ENCODE measurements at regions of chr1 and their contacts with region 1.

Region 1: GRCh38 chr1:155208541-155209311 is at the start of gene MTX1:
- DNase-seq: no peak
- H3K4me3 ChIP-seq: peak within 1 kb of the TSS; percentile 89
- CTCF ChIP-seq: no peak

Region 2: DNA sequence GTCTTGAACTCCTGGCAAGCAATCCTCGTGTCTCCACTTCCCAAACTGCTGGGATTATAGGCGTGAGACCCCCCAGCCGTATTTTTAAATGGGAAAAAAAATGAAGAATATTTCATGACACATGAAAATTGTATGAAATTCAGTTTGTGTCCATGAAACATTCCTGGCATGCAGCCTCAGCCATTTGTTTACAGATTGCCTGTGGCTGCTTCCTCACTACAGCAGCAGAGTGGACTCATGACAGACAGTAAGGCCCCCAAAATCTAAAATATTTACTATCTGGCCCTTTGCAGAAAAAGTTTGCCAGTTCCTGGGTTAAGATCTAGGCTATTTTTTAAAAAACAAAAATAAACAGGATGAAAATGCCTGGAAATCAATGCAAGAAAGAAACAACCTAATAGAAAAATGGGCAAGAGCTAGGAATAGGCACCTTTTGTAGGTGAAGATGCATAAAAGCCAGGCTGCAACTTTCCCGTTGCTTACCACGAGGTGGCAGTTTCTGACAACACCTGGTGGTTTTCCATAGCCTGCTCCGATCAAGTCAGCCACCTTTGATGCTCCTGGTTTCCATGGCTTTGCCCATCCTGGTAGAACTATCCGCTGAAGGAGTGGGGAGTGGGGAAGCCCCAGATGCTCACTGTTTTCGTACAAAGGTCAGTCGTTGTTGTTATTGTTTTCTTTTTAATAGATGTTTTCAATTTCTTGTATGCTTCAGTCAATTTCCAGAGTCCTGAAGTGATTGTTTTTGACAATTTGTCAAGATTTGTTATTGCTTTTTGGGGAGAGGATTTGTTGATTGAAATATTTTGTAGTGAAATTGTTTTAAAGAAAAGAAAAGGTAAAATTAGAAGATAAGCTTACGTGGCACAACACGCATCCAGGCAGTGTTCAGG is 674.5 kb before region 1 on chr1:
- CTCF ChIA-PET with region 1: no interaction called
- POLR2A ChIA-PET with region 1: no interaction called
- DNase-seq: no peak
- H3K4me3 ChIP-seq: no peak overlapping the region
- CTCF ChIP-seq: peak; percentile 35

Region 3: GRCh38 chr1:155193275-155193990 is 15.3 kb before region 1 on chr1:
- CTCF ChIA-PET with region 1: interaction called, 144 read pairs
- POLR2A ChIA-PET with region 1: interaction called, 45 read pairs
- DNase-seq: no peak
- H3K4me3 ChIP-seq: peak overlapping the region; percentile 66
- CTCF ChIP-seq: peak; percentile 99

Region 4: DNA sequence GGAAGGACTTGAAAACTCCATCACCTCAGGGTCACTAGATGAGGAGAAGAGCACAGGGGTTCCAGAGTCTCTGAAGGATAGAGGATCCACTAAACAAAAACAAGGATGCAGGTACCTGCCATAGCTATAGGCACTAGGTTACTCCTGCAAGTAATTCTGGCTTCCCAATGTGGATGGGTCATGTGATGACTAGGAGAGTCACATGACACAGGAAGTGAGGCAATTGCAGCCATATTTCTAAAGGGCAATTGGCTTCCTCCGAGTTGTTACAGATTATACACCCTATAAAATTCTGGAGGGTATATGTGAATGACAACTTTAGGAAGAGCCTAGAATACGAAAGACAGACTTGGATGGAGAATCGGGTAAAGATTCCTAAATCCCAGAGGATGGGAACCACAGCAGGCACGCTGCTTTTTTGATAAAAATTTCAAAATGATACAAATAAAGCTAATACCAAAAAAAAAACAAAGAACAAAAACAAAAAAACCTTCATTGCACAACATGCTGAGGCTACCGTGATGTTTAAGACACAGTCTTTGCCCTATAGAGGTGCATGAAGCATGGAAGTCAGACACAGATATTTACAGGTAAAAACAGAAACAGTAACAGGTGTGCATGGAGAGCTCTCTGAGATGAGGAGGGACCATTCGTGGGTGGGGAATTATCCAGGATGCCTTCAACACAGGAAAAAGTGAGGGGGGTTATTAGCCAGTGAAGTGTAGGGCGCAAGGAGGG is 10.3 kb after region 1 on chr1:
- CTCF ChIA-PET with region 1: interaction called, 139 read pairs
- POLR2A ChIA-PET with region 1: interaction called, 4 read pairs
- DNase-seq: no peak
- H3K4me3 ChIP-seq: no peak overlapping the region
- CTCF ChIP-seq: no peak

Region 5: GRCh38 chr1:155227261-155228095 is 18.8 kb after region 1 on chr1:
- CTCF ChIA-PET with region 1: interaction called, 139 read pairs
- POLR2A ChIA-PET with region 1: interaction called, 8 read pairs
- DNase-seq: peak; percentile 94
- H3K4me3 ChIP-seq: peak overlapping the region; percentile 77
- CTCF ChIP-seq: no peak

Region 6: DNA sequence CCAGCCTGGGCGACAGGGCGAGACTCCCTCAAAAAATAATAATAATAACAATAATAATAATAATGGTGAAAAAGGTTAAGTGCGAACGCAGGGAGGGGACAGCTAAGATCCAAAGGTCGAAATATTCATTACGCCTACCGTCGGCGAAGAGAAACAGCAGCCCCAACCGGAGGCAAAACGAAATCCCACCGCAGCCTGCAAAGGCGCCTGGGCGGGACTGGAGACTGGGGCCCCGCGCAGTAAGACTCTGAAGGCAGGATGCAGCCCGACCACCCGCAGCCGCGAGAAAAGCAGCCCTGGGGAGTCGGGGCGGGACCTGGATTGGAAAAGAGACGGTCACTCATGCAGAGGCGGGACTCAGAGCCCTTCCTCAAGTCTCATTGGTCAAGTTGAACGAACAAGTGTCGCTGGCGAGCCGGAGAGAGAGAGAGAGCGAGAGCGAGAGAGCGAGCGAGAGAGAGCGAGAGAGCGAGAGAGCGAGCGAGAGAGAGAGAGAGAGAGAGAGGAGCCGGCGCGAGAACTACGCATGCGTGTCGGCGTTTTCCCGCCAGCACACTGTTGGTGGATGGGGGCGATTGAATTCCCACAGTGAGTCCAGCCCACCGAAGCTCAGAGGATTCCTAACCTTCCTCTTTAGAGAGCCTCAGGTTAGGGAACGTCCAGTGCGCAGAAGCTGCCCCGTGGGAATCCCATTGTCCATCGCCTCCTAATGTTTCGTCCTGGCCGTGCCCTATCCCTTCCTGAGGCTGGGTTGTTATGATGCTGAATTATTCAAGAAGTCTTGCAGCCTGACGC is 35.8 kb after region 1 on chr1:
- CTCF ChIA-PET with region 1: interaction called, 62 read pairs
- POLR2A ChIA-PET with region 1: interaction called, 4 read pairs
- DNase-seq: peak; percentile 99
- H3K4me3 ChIP-seq: peak overlapping the region; percentile 67
- CTCF ChIP-seq: peak; percentile 23

Region 7: DNA sequence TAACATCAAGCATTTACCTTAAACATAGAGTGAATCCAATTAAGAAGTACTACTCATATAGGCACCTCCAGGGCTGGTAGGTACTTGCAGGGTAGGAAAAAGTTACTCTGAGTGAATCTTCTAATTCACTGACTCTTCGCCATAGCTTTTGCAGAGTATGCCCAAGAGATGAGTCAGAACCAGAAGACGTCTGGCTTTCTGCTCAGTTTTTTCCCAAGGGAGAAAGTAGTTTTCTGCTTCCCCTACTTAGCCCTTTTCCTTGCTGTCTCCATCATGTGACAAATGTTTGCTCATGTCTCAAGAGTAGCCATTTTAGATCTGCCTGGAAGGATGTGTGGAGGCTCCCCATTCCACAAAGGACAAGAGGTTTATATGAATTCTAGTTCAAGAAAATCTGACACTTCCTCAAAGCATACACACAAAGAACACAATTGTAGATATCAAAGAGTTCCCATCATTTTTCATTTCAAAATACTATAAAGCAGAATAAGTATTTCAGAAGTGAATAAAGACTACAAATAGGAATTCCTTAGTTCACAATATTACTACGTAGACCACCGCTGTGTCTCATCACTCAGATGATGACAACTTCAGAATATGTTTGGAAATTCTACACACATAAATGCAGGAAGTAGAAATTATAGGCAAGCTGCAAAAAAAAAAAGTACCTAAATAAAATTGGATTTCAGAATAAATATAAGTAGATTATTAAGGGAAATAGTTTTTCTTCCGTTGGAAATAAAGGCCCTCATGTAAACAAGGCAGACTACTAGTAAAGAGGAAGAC is 255.3 kb after region 1 on chr1:
- CTCF ChIA-PET with region 1: no interaction called
- POLR2A ChIA-PET with region 1: no interaction called
- DNase-seq: peak; percentile 79
- H3K4me3 ChIP-seq: no peak overlapping the region
- CTCF ChIP-seq: no peak

Region 8: DNA sequence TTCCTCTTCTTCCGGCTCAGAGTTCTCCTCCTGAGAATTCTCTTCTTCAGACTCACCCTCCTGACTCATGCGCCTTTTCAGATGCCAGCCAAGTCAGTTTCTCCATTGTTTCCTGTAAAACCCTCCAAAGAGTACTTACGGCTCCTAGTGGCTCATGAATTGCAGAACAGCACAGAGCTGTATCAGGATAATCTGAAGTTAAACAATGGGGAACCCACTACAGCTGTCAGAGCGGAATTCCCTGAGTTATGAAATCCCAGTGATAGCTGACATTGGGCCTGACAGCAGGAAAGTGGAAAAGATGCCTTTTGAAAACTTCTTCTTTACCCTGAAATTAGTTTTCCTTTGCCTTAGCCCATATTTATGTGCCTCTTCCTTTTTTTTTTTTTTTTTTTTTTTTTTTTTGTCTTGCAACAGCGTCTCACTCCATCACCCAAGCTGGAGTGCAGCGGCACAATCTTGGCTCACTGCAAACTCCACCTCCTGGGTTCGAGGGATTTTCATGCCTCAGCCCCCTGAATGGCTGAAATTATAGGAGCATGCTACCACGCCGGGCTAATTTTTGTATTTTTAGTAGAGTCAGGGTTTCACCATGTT is 439.9 kb after region 1 on chr1:
- CTCF ChIA-PET with region 1: interaction called, 17 read pairs
- POLR2A ChIA-PET with region 1: no interaction called
- DNase-seq: peak; percentile 60
- H3K4me3 ChIP-seq: peak overlapping the region; percentile 53
- CTCF ChIP-seq: peak; percentile 58

Measured in AG04449 (cell line).